CD4-positive, alpha-beta memory T cell (primary cell): ENCODE measurements at regions of chr22 and their contacts with region 1.

Region 1: DNA sequence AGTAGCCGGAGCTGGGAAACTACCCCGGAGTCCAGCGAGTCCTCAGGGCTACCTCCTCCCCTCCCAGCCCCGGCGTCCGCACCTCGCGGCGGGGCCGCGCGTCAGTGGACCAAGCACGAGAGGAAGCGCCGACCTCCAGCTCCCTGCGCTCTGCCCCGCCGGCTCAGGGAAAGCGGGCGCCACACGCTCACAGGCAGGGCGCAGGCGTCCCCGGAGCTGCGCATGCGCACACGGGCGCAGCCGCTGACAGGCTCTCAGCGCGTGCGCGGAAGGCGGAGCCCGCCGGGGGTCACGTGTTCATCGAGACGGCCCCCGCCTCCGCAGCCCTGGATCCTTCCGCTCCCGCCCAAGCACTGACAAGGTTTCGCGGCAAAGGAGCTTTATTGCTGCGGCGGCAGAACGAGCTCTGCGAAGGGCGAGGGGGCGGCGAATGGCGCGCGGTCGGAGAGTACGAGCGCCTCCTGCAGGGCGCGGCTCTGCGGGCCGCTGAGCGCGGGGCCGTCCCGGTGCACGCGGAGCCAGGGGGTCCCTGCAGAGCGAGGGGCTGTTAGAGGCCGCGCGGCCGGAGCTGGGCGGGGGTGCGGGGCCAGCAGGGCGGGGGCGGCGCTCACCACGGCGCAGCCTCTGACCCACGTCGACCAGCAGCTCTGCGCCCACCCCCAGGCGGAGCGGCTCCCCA is at the start of gene SCO2:
- DNase-seq: peak; percentile 96 to 98 (median 98)
- H3K4me3 ChIP-seq: peak within 1 kb of the TSS; percentile 47 to 81
- H3K4me3 Mint-ChIP-seq: peak within 1 kb of the TSS; percentile 86 to 94 (median 92)
- H3K27ac ChIP-seq: peak within 1 kb of the TSS; percentile 96
- H3K27ac Mint-ChIP-seq: peak within 1 kb of the TSS; percentile 84 to 97 (median 94)
- H3K4me1 ChIP-seq: peaks cover 48% of the 10 kb centered on the region
- H3K4me1 Mint-ChIP-seq: peaks cover 14 to 39% (median 26%) of the 10 kb centered on the region in 4 donors
- H3K27me3 ChIP-seq: no peaks in the 10 kb centered on the region
- H3K27me3 Mint-ChIP-seq: no peaks in the 10 kb centered on the region
- total RNA-seq, gene SCO2: not detected

Region 2: GRCh38 chr22:50185384-50186087 is 340.0 kb before region 1 on chr22 and contains the start of gene TRABD:
- CTCF ChIA-PET with region 1: interaction called, 5 read pairs
- POLR2A ChIA-PET with region 1: interaction called, 9 read pairs
- intact Hi-C with region 1: loop called (anchors 5 kb)
- DNase-seq: peak; percentile 85 to 90 (median 87)
- H3K4me3 ChIP-seq: peak within 1 kb of the TSS; percentile 65 to 73
- H3K4me3 Mint-ChIP-seq: peak within 1 kb of the TSS; percentile 90 to 99 (median 96)
- H3K27ac ChIP-seq: peak within 1 kb of the TSS; percentile 68
- H3K27ac Mint-ChIP-seq: peak within 1 kb of the TSS; percentile 94 to 98 (median 97)
- H3K4me1 ChIP-seq: peaks cover 40% of the 10 kb centered on the region
- H3K4me1 Mint-ChIP-seq: peaks cover 9 to 41% (median 27%) of the 10 kb centered on the region in 4 donors
- H3K27me3 ChIP-seq: no peaks in the 10 kb centered on the region
- H3K27me3 Mint-ChIP-seq: peaks cover 0 to 2% of the 10 kb centered on the region in 2 donors
- total RNA-seq, gene TRABD: 124 to 126 TPM

Region 3: GRCh38 chr22:50341977-50342650 is 183.4 kb before region 1 on chr22:
- CTCF ChIA-PET with region 1: interaction called, 9 read pairs
- POLR2A ChIA-PET with region 1: interaction called, 12 read pairs
- intact Hi-C with region 1: no loop called
- DNase-seq: peak; percentile 83 to 89 (median 86)
- H3K4me3 ChIP-seq: peak overlapping the region; percentile 39 to 70
- H3K4me3 Mint-ChIP-seq: peak overlapping the region; percentile 80 to 93 (median 88)
- H3K27ac ChIP-seq: peak overlapping the region; percentile 84
- H3K27ac Mint-ChIP-seq: peak overlapping the region; percentile 92 to 97 (median 95)
- H3K4me1 ChIP-seq: peaks cover 28% of the 10 kb centered on the region
- H3K4me1 Mint-ChIP-seq: peaks cover 3 to 12% (median 5%) of the 10 kb centered on the region in 4 donors
- H3K27me3 ChIP-seq: no peaks in the 10 kb centered on the region
- H3K27me3 Mint-ChIP-seq: no peaks in the 10 kb centered on the region

Region 4: DNA sequence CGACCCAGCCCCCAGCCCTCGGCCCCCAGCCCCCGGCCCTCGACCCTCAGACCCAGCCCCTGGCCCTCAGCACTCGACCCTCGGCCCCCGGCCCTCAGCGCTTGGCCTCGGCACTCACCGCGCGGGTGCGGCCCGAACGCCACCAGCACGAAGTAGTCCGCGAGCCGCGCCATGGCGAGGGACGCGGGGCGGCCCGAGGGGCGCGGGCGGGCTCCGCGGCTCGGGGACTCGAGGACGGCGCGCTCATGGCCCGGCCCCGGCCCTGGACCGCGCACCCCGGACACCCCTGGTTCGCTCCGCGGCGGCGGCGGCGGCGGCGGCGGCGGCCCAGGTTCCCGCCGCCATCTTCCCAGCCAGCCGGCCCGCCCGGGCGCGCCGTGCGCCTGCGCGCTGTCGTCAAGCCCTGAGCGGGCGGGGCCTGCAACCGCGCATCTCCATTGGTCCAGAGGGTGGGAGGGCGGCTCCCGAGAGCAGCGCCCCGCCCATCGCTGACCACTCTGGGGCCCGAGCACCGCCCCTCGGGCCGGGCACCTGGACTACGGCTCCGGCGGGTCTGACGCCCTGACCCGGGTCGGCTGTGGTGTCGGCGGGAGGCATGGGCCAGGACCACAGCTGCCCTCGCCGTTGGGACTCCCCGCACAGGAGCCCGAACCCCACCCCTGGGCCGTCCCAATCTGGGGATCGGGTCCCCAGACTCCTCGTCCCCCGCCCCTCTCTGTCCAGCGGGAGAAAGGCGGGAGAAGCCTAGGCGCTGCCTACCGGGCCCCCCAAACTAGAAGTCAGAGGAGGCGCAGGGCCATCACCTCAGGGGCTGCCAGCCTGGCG is 50.6 kb before region 1 on chr22 and contains the start of gene SBF1:
- CTCF ChIA-PET with region 1: interaction called, 29 read pairs
- POLR2A ChIA-PET with region 1: interaction called, 55 read pairs
- intact Hi-C with region 1: loop called (anchors 2 kb)
- DNase-seq: peak; percentile 83 to 88 (median 84)
- H3K4me3 ChIP-seq: peak within 1 kb of the TSS; percentile 73 to 79
- H3K4me3 Mint-ChIP-seq: peak within 1 kb of the TSS; percentile 88 to 99 (median 95)
- H3K27ac ChIP-seq: peak within 1 kb of the TSS; percentile 75
- H3K27ac Mint-ChIP-seq: peak within 1 kb of the TSS; percentile 89 to 98 (median 94)
- H3K4me1 ChIP-seq: peaks cover 47% of the 10 kb centered on the region
- H3K4me1 Mint-ChIP-seq: peaks cover 28 to 62% (median 40%) of the 10 kb centered on the region in 4 donors
- H3K27me3 ChIP-seq: no peaks in the 10 kb centered on the region
- H3K27me3 Mint-ChIP-seq: no peaks in the 10 kb centered on the region
- total RNA-seq, gene SBF1: 217 to 221 TPM

Region 5: DNA sequence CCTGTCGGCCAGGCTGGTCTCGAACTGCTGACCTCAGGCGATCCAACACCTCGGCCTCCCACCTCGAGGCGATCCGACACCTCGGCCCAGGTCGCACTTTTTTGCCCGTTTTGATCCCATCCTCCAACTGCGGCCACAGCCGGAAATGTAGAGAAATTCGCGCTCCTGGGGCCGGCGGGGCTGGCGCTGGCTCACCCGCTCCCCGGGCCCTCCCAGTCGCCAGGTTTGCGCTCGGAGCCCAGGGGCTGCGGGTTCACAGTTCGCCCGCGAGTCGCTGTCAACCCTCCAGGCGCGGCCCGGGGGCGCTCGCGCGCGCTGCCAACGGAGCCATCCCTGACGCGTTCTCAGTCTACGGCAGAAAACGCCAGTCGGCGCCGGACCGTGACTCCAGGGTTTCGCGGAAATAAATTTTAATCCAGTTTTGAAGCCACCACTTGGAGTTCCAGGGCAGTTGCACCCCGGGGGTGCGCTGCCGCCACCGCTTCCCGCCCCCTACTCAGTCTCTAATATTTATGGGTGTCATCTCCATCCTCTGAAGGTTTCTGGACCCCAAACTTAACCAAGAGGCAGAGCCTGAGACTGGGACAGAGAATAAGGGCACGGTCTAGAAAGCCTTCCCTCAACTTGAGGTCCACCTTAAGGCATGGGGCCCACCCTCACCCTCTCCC is 18.7 kb after region 1 on chr22:
- CTCF ChIA-PET with region 1: interaction called, 135 read pairs
- POLR2A ChIA-PET with region 1: interaction called, 321 read pairs
- intact Hi-C with region 1: loop called (anchors 1 kb)
- DNase-seq: peak; percentile 72 to 82 (median 76)
- H3K4me3 ChIP-seq: peak overlapping the region; percentile 24 to 51
- H3K4me3 Mint-ChIP-seq: peak overlapping the region in 7 of 8 donors; percentile 64 to 79 (median 69)
- H3K27ac ChIP-seq: peak overlapping the region; percentile 59
- H3K27ac Mint-ChIP-seq: peak overlapping the region; percentile 42 to 91 (median 85)
- H3K4me1 ChIP-seq: peaks cover 51% of the 10 kb centered on the region
- H3K4me1 Mint-ChIP-seq: peaks cover 26 to 62% (median 42%) of the 10 kb centered on the region in 4 donors
- H3K27me3 ChIP-seq: no peaks in the 10 kb centered on the region
- H3K27me3 Mint-ChIP-seq: no peaks in the 10 kb centered on the region

Region 6: DNA sequence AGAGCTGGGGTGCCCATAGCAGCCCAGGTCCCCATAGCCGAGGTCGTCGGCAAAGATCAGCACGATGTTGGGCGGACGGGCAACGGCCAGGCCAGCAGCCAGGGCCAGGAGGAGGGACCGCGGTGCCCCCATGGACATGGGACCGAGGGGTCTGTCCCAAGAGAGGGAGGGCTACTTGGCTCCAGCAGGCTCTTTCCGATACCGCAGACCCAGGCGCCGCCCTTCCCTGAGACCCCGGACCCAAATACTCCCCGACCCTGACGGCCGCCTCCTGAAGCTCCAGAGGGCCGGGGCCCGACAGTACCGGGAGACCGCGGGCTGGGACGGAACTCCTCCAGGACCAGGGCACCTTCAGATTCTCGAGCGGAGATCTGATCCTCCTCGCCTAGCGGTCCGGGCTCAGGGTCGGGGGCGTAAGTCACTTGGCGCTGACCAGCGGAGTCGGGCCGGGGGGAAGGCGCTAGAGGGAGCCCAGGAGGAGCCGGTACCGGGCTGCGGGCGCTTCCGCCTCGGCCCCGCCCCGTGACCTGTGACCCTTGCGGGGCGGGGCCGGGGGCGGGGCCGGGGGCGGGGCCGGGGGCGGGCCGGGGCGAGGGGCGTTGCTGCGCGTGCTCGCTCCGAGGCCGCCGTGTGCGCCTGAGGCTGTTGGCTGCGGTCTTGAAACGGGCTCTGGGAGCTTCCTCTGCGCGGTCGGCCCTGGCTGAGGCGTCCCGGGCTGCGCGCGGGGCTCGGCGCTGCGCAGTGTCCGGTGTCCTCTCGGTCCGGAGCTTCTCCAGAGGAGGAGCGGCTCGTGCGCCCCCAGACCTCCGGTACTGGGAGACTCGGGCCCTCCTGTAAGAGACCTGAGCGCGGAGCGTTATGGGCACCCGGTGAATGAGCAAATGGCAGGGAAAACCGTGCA is 102.4 kb after region 1 on chr22 and contains the start of gene ARSA:
- CTCF ChIA-PET with region 1: interaction called, 58 read pairs
- POLR2A ChIA-PET with region 1: interaction called, 160 read pairs
- intact Hi-C with region 1: no loop called
- DNase-seq: peak; percentile 81 to 84 (median 81)
- H3K4me3 ChIP-seq: peak within 1 kb of the TSS; percentile 57 to 90
- H3K4me3 Mint-ChIP-seq: peak within 1 kb of the TSS; percentile 83 to 95 (median 90)
- H3K27ac ChIP-seq: peak within 1 kb of the TSS; percentile 84
- H3K27ac Mint-ChIP-seq: peak within 1 kb of the TSS; percentile 88 to 97 (median 91)
- H3K4me1 ChIP-seq: peaks cover 29% of the 10 kb centered on the region
- H3K4me1 Mint-ChIP-seq: peaks cover 10 to 28% (median 18%) of the 10 kb centered on the region in 4 donors
- H3K27me3 ChIP-seq: no peaks in the 10 kb centered on the region
- H3K27me3 Mint-ChIP-seq: no peaks in the 10 kb centered on the region
- total RNA-seq, gene ARSA: 83.2 to 86.8 TPM